Mammary epithelial cell (primary cell): ENCODE measurements at regions of chr1 and their contacts with region 1.

Region 1: GRCh38 chr1:22275721-22276395 is 133.0 kb upstream of the WNT4 start:
- DNase-seq: peak; percentile 39
- H3K4me3 ChIP-seq: no peak overlapping the region
- H3K27ac ChIP-seq: no peak overlapping the region
- H3K4me1 ChIP-seq: peaks cover 8% of the 10 kb centered on the region
- H3K27me3 ChIP-seq: no peaks in the 10 kb centered on the region
- CTCF ChIP-seq: peak; percentile 76 to 93

Region 2: DNA sequence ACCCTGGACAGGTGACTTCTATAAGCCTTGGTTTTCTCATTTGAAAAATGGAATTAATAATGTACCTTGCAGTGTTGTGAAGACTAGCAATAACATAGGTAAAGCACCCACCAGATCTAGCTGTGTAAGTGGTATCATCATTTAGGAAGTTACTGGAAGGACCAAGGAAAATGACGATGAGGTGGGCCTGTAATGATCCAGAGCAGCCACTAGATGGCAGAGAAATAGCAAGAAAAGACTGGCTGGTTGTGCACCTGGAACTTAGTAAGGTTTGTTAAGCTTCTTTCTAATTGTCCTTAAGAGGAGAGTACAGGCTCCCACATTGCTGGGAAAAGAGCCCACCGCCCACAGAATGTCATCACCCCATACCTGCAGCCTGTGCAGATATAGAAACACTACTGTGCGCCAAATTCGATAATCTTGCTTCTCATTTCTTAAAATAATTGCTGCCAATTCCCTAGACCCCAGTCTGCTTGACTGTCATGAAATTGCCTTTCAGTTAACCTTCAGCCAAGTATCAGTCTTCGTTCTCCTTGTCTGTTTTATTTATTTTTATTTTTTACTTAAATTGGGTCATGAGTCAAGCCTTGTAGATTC is 170.1 kb before region 1 on chr1:
- CTCF ChIA-PET with region 1: no interaction called
- dilution Hi-C with region 1: no loop called
- in situ Hi-C with region 1: no loop called
- intact Hi-C with region 1: loop called (anchors 1 kb)
- DNase-seq: peak; percentile 47
- H3K4me3 ChIP-seq: no peak overlapping the region
- H3K27ac ChIP-seq: no peak overlapping the region
- H3K4me1 ChIP-seq: peaks cover 17% of the 10 kb centered on the region
- H3K27me3 ChIP-seq: no peaks in the 10 kb centered on the region
- CTCF ChIP-seq: peak; percentile 80 to 89

Region 3: DNA sequence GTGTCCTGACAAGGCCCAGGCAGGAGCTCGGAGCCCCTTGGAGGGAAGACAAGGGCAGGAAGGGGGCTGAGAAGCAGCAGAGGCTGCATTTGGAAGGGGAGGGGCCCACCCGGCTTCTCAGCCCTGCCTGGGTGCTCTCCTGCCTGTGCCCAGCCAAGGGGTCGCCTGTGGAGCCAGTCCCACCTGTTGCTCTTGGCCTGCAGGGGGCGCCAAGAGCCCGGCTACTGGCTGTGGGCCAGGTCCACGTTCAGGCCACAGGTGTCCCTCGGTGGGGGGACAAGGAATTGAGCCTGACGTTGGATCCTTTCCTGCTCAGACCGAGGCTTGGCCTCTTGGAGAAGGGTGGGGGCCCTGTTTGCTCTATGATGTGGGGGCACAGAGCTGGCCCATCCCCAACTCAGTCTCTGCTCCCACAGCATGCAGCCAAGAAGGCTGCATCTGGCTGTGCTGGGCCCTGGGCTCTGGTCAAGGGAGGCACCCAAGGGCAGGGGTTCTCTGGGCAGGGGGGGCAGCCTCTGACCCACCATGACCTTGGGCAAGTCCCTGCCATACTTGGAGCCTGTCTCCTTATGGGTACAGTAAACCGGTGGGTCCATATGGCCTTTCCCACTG is 143.9 kb before region 1 on chr1:
- CTCF ChIA-PET with region 1: no interaction called
- dilution Hi-C with region 1: no loop called
- in situ Hi-C with region 1: no loop called
- intact Hi-C with region 1: loop called (anchors 1 kb)
- DNase-seq: peak; percentile 26
- H3K4me3 ChIP-seq: no peak overlapping the region
- H3K27ac ChIP-seq: no peak overlapping the region
- H3K4me1 ChIP-seq: peaks cover 16% of the 10 kb centered on the region
- H3K27me3 ChIP-seq: no peaks in the 10 kb centered on the region
- CTCF ChIP-seq: peak; percentile 82 to 90

Region 4: GRCh38 chr1:22341791-22342605 is 66.1 kb after region 1 on chr1:
- CTCF ChIA-PET with region 1: no interaction called
- dilution Hi-C with region 1: no loop called
- in situ Hi-C with region 1: no loop called
- intact Hi-C with region 1: no loop called
- DNase-seq: no peak
- H3K4me3 ChIP-seq: no peak overlapping the region
- H3K27ac ChIP-seq: no peak overlapping the region
- H3K4me1 ChIP-seq: no peaks in the 10 kb centered on the region
- H3K27me3 ChIP-seq: no peaks in the 10 kb centered on the region
- CTCF ChIP-seq: no peak